CD4-positive, alpha-beta memory T cell (primary cell): ENCODE measurements at regions of chr5 and their contacts with region 1.

Region 1: DNA sequence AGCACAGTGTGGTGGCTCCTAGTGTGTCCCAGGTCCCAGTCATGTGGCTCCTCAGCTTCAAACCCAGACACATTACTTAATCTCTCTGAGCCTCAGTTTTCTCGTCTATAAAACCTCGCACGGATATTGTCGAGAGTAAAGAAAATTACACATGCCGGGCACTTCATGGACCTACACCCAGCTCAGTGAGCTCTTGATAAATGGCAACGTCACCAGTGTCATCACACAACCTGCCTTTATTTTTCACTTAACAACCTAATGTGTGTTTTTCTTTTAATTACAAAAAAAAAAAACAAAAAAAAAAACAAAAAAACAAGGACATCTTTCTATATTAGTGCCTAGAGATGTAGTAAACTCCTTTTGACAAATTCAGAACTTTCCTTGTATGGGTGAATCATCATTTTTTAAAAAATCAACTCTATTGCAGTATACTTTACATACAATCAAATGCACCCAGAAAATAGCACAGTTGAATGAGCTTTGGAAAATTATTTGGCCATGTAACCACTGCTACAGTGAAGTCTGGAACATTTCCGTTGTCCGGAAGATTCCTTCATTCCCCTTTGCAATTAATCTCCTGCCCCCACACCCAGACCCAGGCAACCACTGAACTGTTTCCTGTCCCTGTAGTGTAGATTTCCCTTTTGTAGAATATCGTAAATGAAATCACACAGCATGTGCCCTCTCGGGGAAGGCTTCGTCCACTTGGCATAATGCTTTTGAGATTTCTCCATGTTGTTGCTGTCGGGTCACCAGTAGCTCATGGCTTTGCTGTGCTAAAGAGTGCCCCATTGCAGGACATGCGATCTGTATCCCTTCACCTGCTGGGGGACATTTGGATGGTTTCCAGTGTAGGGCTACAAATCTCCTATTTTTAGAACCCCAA is 100.4 kb upstream of the LARP1 start:
- DNase-seq: no peak
- H3K4me3 ChIP-seq: no peak overlapping the region
- H3K4me3 Mint-ChIP-seq: peak overlapping the region in 1 of 8 donors; percentile 39
- H3K27ac ChIP-seq: no peak overlapping the region
- H3K27ac Mint-ChIP-seq: peak overlapping the region in 3 of 7 donors; percentile 50 to 55 (median 50)
- H3K4me1 ChIP-seq: no peaks in the 10 kb centered on the region
- H3K4me1 Mint-ChIP-seq: peaks cover 2 to 5% (median 4%) of the 10 kb centered on the region in 4 donors
- H3K27me3 ChIP-seq: no peaks in the 10 kb centered on the region
- H3K27me3 Mint-ChIP-seq: no peaks in the 10 kb centered on the region

Region 2: DNA sequence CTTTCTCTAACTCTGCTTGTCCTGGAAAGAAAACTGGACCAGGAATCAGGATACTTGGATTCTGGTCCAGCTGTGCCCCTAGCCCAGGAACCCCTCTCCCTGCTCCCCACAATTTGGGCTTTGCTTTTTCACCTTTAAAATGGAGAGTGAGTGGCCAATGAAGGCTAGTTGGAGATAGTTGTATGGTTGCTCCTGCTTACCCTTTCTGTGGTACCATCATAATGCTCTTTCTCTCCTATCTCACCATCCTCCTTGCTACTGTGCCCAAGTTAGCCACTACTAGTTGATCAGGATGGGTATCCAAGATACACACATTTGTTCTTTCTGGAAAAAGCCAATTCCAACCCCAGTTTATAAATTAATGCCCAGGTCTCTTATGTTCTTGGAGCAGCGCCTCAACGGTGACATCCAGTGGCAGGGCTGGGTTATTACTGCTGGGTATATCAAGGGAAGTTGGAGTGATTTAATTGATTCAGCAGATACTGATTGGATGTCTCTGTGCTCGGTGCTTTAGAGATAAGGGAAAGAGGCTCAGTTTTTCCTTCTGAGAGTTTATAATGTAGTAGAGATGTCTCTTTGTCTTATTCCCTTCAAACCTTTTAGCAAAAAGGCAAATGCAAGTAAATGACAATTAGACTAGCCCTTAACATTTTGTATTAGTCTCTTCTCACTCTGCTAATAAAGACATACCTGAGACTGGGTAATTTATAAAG is 157.1 kb after region 1 on chr5:
- CTCF ChIA-PET with region 1: interaction called, 31 read pairs
- POLR2A ChIA-PET with region 1: interaction called, 3 read pairs
- intact Hi-C with region 1: loop called (anchors 1 kb)
- DNase-seq: peak; percentile 58 to 66 (median 62)
- H3K4me3 ChIP-seq: no peak overlapping the region
- H3K4me3 Mint-ChIP-seq: peak overlapping the region in 1 of 8 donors; percentile 16
- H3K27ac ChIP-seq: no peak overlapping the region
- H3K27ac Mint-ChIP-seq: peak overlapping the region in 4 of 7 donors; percentile 9 to 91 (median 46)
- H3K4me1 ChIP-seq: peaks cover 15% of the 10 kb centered on the region
- H3K4me1 Mint-ChIP-seq: peaks cover 14 to 37% (median 21%) of the 10 kb centered on the region in 4 donors
- H3K27me3 ChIP-seq: no peaks in the 10 kb centered on the region
- H3K27me3 Mint-ChIP-seq: no peaks in the 10 kb centered on the region

Region 3: DNA sequence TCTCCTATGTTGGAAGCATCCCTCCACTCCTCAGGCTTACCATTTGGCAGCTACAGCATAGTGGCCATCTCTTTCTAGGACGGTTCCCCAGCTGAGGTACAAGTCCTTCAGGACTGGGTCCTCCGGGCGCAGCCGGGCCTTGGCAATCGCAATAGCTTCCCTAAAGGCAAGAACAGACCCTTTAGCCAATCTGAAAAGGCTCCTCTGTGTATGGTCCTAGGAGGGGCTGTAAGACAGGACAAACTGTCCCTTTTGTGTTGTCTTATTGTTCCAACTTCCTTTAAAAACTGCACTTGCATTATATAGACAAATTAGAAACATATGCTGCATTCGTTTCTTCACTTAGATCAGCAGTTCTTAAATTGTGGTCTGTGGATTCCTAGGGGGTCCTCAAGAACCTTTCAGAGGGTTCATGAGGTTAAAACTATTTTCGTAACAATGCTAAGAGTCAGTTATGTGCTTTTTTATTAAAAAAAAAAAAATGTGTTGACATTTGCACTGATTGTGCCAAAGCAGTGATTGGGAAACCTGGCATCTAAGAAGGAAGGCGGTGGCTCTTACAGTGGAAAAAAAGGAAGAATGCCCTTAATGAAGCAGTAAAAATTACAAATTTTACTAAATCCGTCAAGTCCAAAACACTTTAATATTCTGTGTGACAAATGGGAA is 244.6 kb after region 1 on chr5:
- CTCF ChIA-PET with region 1: interaction called, 10 read pairs
- POLR2A ChIA-PET with region 1: no interaction called
- intact Hi-C with region 1: loop called (anchors 10 kb)
- DNase-seq: no peak
- H3K4me3 ChIP-seq: no peak overlapping the region
- H3K4me3 Mint-ChIP-seq: no peak overlapping the region
- H3K27ac ChIP-seq: no peak overlapping the region
- H3K27ac Mint-ChIP-seq: peak overlapping the region in 1 of 7 donors; percentile 53
- H3K4me1 ChIP-seq: no peaks in the 10 kb centered on the region
- H3K4me1 Mint-ChIP-seq: no peaks in the 10 kb centered on the region
- H3K27me3 ChIP-seq: no peaks in the 10 kb centered on the region
- H3K27me3 Mint-ChIP-seq: no peaks in the 10 kb centered on the region